Activated CD4-positive, alpha-beta T cell treated with anti-CD3 and anti-CD28 coated beads for 36 hours (primary cell): ENCODE measurements at regions of chr16 and their contacts with region 1.

Region 1: DNA sequence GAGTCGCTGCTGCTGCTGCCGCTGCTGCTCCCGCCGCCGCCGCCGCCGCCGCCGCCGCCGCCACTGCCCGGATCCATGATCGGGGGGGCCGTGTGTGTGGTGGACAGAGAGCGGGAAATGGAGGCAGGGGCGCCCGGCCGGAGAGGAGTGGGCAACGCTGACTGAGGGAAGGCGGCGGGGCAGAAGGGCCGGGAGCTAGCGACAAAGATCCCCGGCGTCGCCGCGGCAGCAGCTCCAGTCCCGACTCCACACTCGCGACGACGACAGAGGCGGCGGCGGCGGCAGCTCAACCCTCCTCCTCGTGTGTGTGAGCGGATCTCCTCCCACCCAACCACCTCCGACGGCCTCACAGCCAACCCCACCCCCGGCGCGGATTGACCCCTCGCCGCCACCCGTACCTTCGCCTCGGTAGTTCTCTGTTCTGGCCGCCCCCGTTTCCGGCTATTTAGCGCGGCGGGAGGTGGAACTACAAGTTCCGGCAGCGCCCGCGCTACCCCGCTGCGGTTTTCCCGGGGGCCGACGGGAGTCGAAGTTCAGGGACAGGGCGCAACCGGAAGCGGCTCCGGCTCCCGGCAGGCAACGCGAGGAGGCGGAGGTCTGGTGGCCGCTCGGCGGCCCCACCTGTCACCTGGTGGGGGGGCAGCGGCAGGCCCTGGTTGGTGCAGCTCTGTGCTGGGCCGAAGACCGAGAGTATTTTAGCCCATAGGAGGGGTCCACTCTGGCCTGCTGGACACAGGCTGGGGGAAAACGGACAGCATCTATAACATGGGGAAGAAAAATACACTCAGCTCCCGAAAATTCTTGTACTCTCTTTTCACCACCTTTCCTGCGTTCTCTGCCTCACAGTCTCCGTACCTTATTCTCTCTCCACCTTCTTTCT is at the start of gene GSPT1:
- DNase-seq: peak; percentile 100
- ATAC-seq: peak; percentile 89
- H3K4me3 Mint-ChIP-seq: peak within 1 kb of the TSS; percentile 89
- H3K27ac Mint-ChIP-seq: peak within 1 kb of the TSS; percentile 96
- H3K4me1 Mint-ChIP-seq: peaks cover 32% of the 10 kb centered on the region
- H3K27me3 Mint-ChIP-seq: no peaks in the 10 kb centered on the region
- total RNA-seq, gene GSPT1: 234 to 260 TPM

Region 2: DNA sequence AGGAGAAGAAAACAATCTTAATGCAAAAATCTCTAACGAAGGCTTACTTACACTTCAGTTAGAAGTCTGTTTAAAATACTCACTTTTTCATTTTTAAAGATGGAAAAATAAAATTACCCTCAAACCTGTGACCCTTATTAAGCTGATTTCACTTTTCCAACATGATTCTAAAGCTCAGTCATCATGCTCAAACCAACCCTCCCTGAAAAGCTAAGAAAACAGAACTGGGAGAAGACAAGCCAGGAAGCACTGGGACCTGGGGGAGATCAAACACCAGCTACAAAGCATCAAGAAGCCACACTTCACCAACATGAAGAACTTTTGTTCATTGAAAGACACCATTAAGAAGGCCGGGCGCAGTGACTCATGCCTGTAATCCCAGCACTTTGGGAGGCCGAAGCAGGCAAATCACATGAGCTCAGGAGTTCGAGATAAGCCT is 418.0 kb before region 1 on chr16:
- CTCF ChIA-PET with region 1: no interaction called
- POLR2A ChIA-PET with region 1: no interaction called
- intact Hi-C with region 1: loop called in 1 of 2 experiments (anchors 5 kb)
- DNase-seq: no peak
- ATAC-seq: no peak
- H3K4me3 Mint-ChIP-seq: no peak overlapping the region
- H3K27ac Mint-ChIP-seq: peak overlapping the region; percentile 60
- H3K4me1 Mint-ChIP-seq: peaks cover 38% of the 10 kb centered on the region
- H3K27me3 Mint-ChIP-seq: no peaks in the 10 kb centered on the region

Region 3: GRCh38 chr16:11667824-11668622 is 247.9 kb before region 1 on chr16 and contains the start of gene SNN:
- CTCF ChIA-PET with region 1: no interaction called
- POLR2A ChIA-PET with region 1: no interaction called
- intact Hi-C with region 1: loop called in 1 of 2 experiments (anchors 1 kb)
- DNase-seq: peak; percentile 93
- ATAC-seq: peak; percentile 90
- H3K4me3 Mint-ChIP-seq: peak within 1 kb of the TSS; percentile 72
- H3K27ac Mint-ChIP-seq: no peak within 1 kb of the TSS
- H3K4me1 Mint-ChIP-seq: peaks cover 73% of the 10 kb centered on the region
- H3K27me3 Mint-ChIP-seq: no peaks in the 10 kb centered on the region
- total RNA-seq, gene SNN: 6.0 to 7.2 TPM

Region 4: DNA sequence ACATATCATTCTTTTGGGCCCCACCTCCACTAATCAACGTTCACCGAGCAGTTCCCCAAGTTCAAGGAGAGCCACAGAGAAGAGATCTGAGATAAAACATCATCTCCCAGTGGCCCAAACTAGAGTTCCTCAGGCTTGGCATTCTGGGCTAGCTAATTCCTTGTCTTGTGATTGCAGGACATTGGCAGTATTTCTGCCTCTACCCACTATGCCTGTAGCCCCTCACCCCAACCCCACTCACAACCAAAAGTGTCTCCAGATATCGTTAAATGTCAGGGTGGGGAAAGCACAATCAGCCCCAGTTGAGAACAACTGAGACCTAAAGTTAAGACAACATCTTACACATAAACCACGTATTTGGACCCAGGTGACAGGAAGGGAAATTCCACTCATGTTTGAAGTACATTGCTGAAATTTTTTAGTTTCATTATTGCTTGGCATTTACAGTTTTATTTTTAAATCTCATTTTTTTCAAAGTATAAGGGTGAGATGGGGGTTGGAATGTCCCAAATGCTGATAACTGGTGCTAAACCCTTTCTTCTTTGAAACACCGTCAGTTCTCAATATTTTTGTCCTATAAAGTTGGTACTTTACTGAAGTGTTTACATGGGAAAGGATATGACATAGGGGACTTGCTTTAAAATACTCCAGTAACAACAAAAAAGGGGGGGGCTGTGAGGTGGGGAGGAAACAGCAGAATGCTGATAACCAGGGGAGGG is 132.4 kb before region 1 on chr16:
- CTCF ChIA-PET with region 1: no interaction called
- POLR2A ChIA-PET with region 1: no interaction called
- intact Hi-C with region 1: loop called (anchors 1 to 5 kb)
- DNase-seq: peak; percentile 65
- ATAC-seq: peak; percentile 80
- H3K4me3 Mint-ChIP-seq: peak overlapping the region; percentile 74
- H3K27ac Mint-ChIP-seq: peak overlapping the region; percentile 97
- H3K4me1 Mint-ChIP-seq: peaks cover 74% of the 10 kb centered on the region
- H3K27me3 Mint-ChIP-seq: no peaks in the 10 kb centered on the region

Region 5: GRCh38 chr16:11955713-11956123 is 39.8 kb after region 1 on chr16:
- CTCF ChIA-PET with region 1: no interaction called
- POLR2A ChIA-PET with region 1: no interaction called
- intact Hi-C with region 1: no loop called
- DNase-seq: no peak
- ATAC-seq: no peak
- H3K4me3 Mint-ChIP-seq: no peak overlapping the region
- H3K27ac Mint-ChIP-seq: no peak overlapping the region
- H3K4me1 Mint-ChIP-seq: no peaks in the 10 kb centered on the region
- H3K27me3 Mint-ChIP-seq: no peaks in the 10 kb centered on the region

Region 6: GRCh38 chr16:11977376-11978041 is 61.6 kb after region 1 on chr16:
- CTCF ChIA-PET with region 1: no interaction called
- POLR2A ChIA-PET with region 1: interaction called, 3 read pairs
- intact Hi-C with region 1: loop called (anchors 1 to 2 kb)
- DNase-seq: no peak
- ATAC-seq: no peak
- H3K4me3 Mint-ChIP-seq: peak overlapping the region; percentile 88
- H3K27ac Mint-ChIP-seq: peak overlapping the region; percentile 30
- H3K4me1 Mint-ChIP-seq: peaks cover 39% of the 10 kb centered on the region
- H3K27me3 Mint-ChIP-seq: no peaks in the 10 kb centered on the region

Region 7: DNA sequence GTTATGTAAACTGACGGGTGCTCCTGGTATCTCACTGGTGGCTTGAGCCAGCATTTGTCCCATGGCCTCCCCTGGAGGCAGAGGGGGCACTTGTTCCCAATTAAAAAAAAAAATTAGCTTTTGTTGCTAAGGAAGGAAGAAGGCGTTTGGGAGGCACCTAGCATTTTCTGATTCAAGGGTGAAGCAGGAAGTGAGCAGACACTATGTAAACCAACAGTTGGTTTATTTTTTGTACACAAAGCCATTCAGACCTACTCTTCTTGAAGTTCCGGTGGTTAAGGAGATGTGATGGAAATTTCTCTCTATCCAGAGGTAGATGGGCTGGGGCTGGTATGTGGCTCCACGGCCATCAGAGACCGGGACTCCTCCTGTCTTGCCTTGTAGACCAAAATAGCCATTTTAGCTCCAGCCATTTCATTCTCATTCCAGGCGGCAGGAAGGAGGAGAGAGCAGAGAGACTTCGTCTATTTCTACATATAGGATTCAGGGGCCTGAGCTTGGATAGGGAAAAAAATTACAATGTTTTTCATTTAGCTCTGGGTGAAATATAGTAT is 163.6 kb after region 1 on chr16:
- CTCF ChIA-PET with region 1: no interaction called
- POLR2A ChIA-PET with region 1: interaction called, 4 read pairs
- intact Hi-C with region 1: loop called (anchors 1 to 5 kb)
- DNase-seq: peak; percentile 13
- ATAC-seq: no peak
- H3K4me3 Mint-ChIP-seq: peak overlapping the region; percentile 53
- H3K27ac Mint-ChIP-seq: peak overlapping the region; percentile 97
- H3K4me1 Mint-ChIP-seq: peaks cover 76% of the 10 kb centered on the region
- H3K27me3 Mint-ChIP-seq: no peaks in the 10 kb centered on the region